ENCODE measurements at regions of chr4 and their contacts with region 1.

Region 1: DNA sequence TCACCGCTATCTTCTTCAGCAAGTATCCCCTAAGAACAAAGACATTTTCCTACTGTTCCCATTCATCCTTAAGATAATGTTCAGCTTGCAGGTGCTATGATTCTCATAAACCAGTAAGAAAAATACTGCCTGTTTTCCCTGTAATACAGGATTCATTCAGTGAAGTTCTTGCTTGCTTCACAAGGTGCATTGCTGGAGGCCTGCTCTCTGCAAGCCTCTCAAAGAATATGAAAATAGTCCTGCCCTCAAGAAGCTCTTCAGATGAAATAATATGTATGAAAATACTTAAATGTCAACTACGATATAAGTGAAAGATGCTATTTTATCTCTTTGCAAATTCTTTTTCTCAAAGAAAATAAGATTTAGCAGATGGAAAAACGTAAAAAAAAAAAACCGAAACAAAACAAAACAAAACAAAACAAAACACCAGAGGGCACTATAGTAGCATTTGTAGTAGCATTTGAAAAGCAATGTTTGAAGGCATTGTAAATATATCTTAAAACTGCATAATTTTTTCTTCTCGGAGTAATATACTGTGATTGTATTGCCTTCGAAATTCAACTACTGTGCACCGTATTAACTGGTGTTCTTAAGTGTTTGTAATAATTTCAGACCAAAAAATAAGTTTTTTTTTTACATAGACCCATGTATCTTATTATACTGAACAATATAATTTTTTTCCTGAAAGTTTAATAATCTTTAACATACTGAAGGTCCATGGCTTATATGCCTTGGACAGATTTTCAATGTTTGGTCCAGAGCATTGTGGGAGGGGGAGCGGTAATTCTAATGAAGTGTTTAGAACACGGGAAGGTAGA is 26.0 kb downstream of the ADH4 start:
- DNase-seq: no peak
- H3K4me3 ChIP-seq: no peak overlapping the region
- H3K27ac ChIP-seq: no peak overlapping the region
- H3K27me3 ChIP-seq: no peaks in the 10 kb centered on the region
- CTCF ChIP-seq: peak in 55 of 56 donors; percentile 25 to 79 (median 54)

Region 2: DNA sequence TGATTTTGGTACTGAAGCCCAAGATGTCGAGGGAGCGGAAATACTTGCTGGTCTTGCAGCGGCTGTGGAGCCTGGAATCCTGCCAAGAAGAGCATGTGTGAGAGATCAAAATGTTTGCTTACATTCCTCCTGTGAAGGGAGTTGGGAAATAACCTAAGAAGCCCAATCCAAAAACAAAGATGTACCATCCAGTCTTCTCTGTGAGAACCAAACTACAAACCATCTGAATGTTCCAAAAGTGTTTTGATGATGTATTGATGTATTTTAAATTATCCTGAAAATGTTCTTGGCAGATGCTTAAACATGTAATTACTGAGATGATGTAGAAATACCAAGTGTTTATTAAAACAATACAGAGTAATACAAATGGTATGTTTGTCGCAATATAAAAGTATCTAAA is 182.8 kb after region 1 on chr4:
- intact Hi-C with region 1: no loop called
- DNase-seq: peak in 2 of 10 donors; percentile 16 to 32
- H3K4me3 ChIP-seq: no peak overlapping the region
- H3K27ac ChIP-seq: peak overlapping the region in 5 of 59 donors; percentile 15 to 75 (median 42)
- H3K27me3 ChIP-seq: no peaks in the 10 kb centered on the region
- CTCF ChIP-seq: no peak

Region 3: DNA sequence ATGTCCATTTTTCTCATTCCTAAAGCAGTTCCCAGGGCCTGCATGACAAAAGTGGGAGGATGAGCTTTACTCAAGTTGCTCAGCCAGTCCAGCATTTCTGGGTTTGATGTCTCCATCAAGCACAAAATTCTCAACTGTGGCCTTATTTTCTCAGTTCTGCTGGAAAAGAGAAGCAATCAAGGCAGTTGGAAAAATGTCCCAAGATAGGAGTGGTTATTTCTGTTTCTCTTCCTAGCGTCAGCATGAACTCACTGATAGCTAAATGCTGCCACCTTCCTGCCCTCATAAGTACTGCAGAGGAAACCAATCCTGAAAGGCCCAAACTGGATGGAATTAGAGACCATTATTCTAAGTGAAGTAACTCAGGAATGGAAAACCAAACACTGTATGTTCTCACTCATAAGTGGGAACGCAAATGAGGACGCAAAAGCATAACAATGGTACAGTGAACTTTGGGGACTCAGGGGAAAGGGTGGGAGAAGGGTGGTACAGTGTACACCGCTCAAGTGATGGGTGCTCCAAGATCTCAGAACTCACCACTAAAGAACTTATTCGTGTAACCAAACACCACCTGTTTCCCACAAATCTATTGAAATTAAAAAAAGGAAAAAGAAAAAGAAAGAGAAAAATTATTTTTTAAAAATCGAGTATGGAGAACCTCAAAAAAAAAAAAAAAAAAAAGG is 287.5 kb after region 1 on chr4:
- intact Hi-C with region 1: loop called (anchors 5 to 10 kb)
- DNase-seq: peak in 8 of 10 donors; percentile 29 to 75 (median 50)
- H3K4me3 ChIP-seq: no peak overlapping the region
- H3K27ac ChIP-seq: peak overlapping the region in 19 of 59 donors; percentile 5 to 63 (median 29)
- H3K27me3 ChIP-seq: no peaks in the 10 kb centered on the region
- CTCF ChIP-seq: peak; percentile 72 to 97 (median 92)

Region 4: DNA sequence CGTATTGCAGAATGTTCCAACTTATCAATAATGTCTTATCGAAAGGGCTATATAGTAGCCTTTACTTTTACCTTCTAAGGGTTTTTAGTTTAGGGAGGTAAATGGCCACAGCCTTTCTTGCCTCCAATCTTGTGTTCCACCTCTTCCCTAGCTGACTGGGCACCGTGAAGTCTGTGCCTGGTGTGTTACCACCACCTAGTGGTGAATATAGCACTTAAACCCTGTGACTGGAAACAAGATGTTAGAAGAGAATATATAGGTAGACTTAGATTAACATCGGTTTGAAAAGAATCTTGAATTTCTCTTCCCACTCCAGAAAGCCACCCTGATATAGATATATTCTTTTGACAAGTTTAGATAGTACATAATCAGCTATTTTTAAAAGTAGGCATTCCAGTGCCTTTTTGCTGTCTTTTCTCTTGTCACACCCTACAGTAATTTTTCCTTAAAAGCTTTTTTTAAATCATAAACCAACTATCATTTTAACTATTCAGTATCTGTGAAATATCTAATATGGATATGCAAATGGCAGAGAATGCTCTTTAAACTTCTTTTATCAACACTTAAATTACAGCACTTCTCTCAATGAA is 344.9 kb after region 1 on chr4:
- intact Hi-C with region 1: loop called in 1 of 2 experiments (anchors 2 kb)
- DNase-seq: peak in 9 of 10 donors; percentile 28 to 64 (median 54)
- H3K4me3 ChIP-seq: no peak overlapping the region
- H3K27ac ChIP-seq: no peak overlapping the region
- H3K27me3 ChIP-seq: peaks cover 0 to 4% (median 0%) of the 10 kb centered on the region in 45 donors
- CTCF ChIP-seq: peak; percentile 69 to 93 (median 82)

Measured in dorsolateral prefrontal cortex (tissue), 120 donors.